Activated CD4-positive, alpha-beta T cell treated with anti-CD3 and anti-CD28 coated beads for 36 hours (primary cell): ENCODE measurements at regions of chr4 and their contacts with region 1.

Region 1: DNA sequence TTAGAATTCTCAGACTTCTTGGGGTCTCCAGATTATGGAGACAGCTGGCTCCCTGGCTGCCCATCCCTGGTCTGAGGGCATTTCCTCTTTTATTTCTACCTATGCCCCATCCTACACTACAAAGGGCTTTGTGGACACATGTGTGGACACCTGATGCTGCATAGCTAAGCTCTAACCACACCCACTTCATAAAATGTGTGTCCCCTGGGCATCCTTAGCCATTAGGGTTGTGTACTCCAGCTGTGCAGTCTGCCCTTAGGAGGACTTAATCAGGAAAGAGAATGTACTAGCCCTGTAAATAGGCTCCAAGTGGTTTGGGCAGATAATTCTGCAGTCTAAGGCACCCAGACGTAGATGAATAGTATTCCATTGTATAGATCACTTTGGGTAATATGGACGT is 47.0 kb downstream of the COQ2 start:
- DNase-seq: no peak
- ATAC-seq: no peak
- H3K4me3 Mint-ChIP-seq: no peak overlapping the region
- H3K27ac Mint-ChIP-seq: no peak overlapping the region
- H3K4me1 Mint-ChIP-seq: peaks cover 42% of the 10 kb centered on the region
- H3K27me3 Mint-ChIP-seq: peaks cover 25% of the 10 kb centered on the region

Region 2: GRCh38 chr4:83074086-83074704 is 163.4 kb before region 1 on chr4:
- CTCF ChIA-PET with region 1: no interaction called
- POLR2A ChIA-PET with region 1: interaction called, 5 read pairs
- intact Hi-C with region 1: loop called (anchors 1 kb)
- DNase-seq: peak; percentile 63
- ATAC-seq: peak; percentile 91
- H3K4me3 Mint-ChIP-seq: peak overlapping the region; percentile 25
- H3K27ac Mint-ChIP-seq: no peak overlapping the region
- H3K4me1 Mint-ChIP-seq: peaks cover 13% of the 10 kb centered on the region
- H3K27me3 Mint-ChIP-seq: no peaks in the 10 kb centered on the region

Region 3: DNA sequence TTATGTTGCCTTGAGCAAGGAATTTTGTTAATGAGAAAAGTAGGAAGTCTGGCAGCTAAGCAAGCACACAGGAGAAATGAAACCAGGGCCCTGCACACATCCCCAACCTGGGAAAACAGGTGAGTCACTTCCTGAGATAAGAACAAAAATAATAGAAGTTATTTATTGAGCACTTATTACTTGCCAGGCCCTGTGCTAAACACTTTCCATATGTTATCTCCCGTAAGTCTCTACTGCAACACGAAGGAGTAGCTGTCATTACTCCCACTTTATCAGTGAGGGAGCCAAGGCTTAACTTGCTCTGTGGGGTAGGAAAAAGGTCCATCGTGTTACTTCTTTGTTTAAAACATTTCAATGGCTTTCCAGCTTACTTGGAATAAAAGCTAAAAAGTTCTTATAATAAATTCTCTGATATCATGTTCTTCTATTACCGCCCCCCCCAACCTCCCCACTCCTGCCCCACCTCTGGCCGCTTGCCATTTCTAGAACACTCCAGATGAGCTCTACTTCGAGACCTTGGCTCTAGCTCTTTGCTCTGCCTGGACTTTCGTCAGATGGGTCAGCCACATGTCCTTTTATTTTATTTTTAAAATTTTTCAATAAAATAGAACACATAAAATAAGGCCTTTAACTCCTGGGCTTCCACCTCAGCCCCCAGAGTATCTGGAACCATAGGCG is 86.8 kb before region 1 on chr4:
- CTCF ChIA-PET with region 1: no interaction called
- POLR2A ChIA-PET with region 1: no interaction called
- intact Hi-C with region 1: no loop called
- DNase-seq: no peak
- ATAC-seq: no peak
- H3K4me3 Mint-ChIP-seq: no peak overlapping the region
- H3K27ac Mint-ChIP-seq: no peak overlapping the region
- H3K4me1 Mint-ChIP-seq: peaks cover 15% of the 10 kb centered on the region
- H3K27me3 Mint-ChIP-seq: no peaks in the 10 kb centered on the region

Region 4: GRCh38 chr4:83217721-83218522 is 19.7 kb before region 1 on chr4:
- CTCF ChIA-PET with region 1: interaction called, 9 read pairs
- POLR2A ChIA-PET with region 1: interaction called, 4 read pairs
- intact Hi-C with region 1: loop called (anchors 1 kb)
- DNase-seq: peak; percentile 73
- ATAC-seq: peak; percentile 85
- H3K4me3 Mint-ChIP-seq: peak overlapping the region; percentile 20
- H3K27ac Mint-ChIP-seq: peak overlapping the region; percentile 76
- H3K4me1 Mint-ChIP-seq: peaks cover 79% of the 10 kb centered on the region
- H3K27me3 Mint-ChIP-seq: peaks cover 2% of the 10 kb centered on the region

Region 5: DNA sequence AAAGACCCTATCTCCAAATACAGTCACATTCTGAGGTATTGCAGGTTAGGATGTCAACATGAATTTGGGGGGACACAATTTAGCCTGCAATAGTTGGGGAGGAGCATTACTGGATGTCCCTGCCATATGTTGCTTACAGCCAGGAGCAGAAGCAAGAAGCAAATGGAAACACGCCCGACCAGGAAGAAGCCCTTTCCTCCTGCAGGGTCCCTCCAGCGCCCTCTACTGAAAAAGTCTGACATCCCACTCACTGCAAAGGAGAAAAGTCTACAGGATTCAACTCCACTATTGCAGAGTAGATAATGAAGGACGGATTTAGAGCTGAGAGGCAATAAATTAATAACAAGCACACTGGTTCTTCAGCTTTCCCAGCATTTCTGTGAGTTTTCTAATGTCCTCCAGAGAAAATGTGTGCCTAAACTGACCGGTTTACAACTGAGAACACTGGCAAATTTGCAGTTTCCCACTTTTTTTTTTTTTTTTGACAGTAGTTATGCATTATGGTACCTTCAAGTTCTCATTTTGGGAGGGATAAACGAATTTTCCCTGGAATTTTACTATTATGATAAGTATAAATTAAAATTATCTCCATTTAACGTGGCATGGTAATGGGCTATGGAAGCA is 15.3 kb after region 1 on chr4:
- CTCF ChIA-PET with region 1: interaction called, 5 read pairs
- POLR2A ChIA-PET with region 1: no interaction called
- intact Hi-C with region 1: loop called in 1 of 2 experiments (anchors 2 kb)
- DNase-seq: peak; percentile 80
- ATAC-seq: peak; percentile 91
- H3K4me3 Mint-ChIP-seq: no peak overlapping the region
- H3K27ac Mint-ChIP-seq: no peak overlapping the region
- H3K4me1 Mint-ChIP-seq: peaks cover 24% of the 10 kb centered on the region
- H3K27me3 Mint-ChIP-seq: no peaks in the 10 kb centered on the region

Region 6: GRCh38 chr4:83259586-83259985 is 22.0 kb after region 1 on chr4:
- CTCF ChIA-PET with region 1: interaction called, 10 read pairs
- POLR2A ChIA-PET with region 1: no interaction called
- intact Hi-C with region 1: no loop called
- DNase-seq: no peak
- ATAC-seq: no peak
- H3K4me3 Mint-ChIP-seq: no peak overlapping the region
- H3K27ac Mint-ChIP-seq: no peak overlapping the region
- H3K4me1 Mint-ChIP-seq: no peaks in the 10 kb centered on the region
- H3K27me3 Mint-ChIP-seq: no peaks in the 10 kb centered on the region

Region 7: DNA sequence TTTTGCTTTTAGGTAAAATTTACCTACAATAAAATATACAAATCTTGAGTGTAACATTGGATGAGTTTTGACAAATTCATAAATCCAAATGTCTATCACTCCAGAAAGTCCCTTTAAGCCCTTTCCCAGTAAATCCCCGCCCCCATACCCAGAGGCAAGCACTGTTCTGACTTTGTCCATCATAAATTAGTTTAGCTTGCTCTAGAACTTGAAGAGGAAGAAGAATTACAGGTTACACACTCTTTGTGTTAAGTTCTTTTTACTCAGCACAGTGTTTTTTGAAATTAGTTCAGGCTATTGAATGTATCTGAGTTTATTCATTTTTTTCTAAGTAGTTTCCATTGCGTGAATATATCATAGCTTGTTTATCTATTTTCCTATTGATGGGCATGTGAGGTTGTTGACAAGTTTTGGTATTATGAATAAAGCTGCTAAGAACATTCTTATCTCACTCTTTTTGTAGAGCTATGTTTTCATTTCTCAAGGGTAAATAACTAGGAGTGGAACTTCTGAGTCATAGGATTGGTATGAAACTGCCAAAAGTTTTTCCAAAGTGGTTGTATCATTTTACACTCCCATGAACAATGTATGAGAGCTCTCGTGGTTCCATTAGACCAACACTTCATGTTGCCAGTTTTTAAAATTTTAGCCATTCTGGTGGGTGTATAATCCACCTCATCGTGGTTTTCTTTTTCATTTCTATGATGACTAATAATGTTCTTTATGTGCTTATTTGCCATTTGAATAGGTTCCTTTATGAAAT is 119.5 kb after region 1 on chr4:
- CTCF ChIA-PET with region 1: no interaction called
- POLR2A ChIA-PET with region 1: no interaction called
- intact Hi-C with region 1: loop called in 1 of 2 experiments (anchors 1 kb)
- DNase-seq: peak; percentile 52
- ATAC-seq: peak; percentile 91
- H3K4me3 Mint-ChIP-seq: no peak overlapping the region
- H3K27ac Mint-ChIP-seq: peak overlapping the region; percentile 72
- H3K4me1 Mint-ChIP-seq: peaks cover 23% of the 10 kb centered on the region
- H3K27me3 Mint-ChIP-seq: no peaks in the 10 kb centered on the region

Region 8: GRCh38 chr4:83771113-83771705 is 533.6 kb after region 1 on chr4:
- CTCF ChIA-PET with region 1: no interaction called
- POLR2A ChIA-PET with region 1: no interaction called
- intact Hi-C with region 1: no loop called
- DNase-seq: peak; percentile 30
- ATAC-seq: no peak
- H3K4me3 Mint-ChIP-seq: no peak overlapping the region
- H3K27ac Mint-ChIP-seq: no peak overlapping the region
- H3K4me1 Mint-ChIP-seq: no peaks in the 10 kb centered on the region
- H3K27me3 Mint-ChIP-seq: peaks cover 9% of the 10 kb centered on the region